Prostate gland (tissue), 2 donors: ENCODE measurements at regions of chr1 and their contacts with region 1.

Region 1: DNA sequence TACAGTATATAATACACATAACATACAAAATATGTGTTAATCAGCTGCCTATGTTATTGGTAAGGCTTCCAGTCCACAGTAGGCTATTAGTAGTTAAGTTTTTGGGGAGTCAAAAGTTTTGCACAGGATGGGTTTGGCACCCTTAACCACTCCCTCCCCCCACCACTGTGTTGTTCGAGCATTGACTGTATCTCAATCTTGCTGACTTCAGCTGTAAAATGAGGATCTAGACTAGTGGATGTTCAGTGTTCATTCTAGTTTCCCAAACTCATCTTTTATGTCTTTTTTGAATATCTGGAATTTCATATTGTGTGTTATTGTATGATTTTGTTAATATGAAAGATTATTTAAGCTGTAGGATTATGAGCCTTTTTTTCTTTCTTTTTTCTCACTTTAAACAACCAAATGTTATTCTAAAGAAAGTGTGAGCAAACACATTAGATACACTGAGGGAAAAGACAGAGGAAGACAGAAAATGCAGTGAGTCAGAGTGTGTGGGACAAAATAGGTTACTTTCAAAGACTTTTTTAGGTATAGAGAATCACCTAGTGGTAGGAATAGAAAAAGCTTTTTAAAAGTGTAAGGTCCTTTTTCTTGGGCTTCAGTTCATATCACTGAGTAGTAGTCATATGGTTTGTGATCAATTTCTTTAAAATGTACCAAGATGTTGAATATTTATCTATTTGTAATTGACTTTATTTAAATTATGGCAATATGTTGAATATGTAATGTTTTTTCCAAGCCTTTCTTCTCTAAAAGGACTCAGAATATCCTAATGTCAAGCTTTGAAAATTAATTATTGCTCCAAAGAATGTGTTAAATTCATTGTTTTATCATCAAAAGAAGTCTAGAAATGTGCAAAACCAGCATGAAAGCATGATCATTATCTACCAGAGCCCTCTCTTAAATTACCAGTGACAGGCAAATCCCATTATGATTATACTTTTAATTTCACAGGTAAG is 17.9 kb upstream of the CENPF start:
- DNase-seq: no peak
- H3K4me3 ChIP-seq: no peak overlapping the region
- H3K27ac ChIP-seq: no peak overlapping the region
- H3K4me1 ChIP-seq: peaks cover 8% of the 10 kb centered on the region
- H3K27me3 ChIP-seq: no peaks in the 10 kb centered on the region
- CTCF ChIP-seq: peak; percentile 34 to 93 (median 78)
- POLR2A ChIP-seq: no peak

Region 2: GRCh38 chr1:214271174-214271858 is 313.8 kb before region 1 on chr1:
- intact Hi-C with region 1: loop called (anchors 10 kb)
- DNase-seq: no peak
- H3K4me3 ChIP-seq: no peak overlapping the region
- H3K27ac ChIP-seq: no peak overlapping the region
- H3K4me1 ChIP-seq: no peaks in the 10 kb centered on the region
- H3K27me3 ChIP-seq: no peaks in the 10 kb centered on the region
- CTCF ChIP-seq: no peak
- POLR2A ChIP-seq: no peak

Region 3: GRCh38 chr1:214328770-214329469 is 256.2 kb before region 1 on chr1:
- intact Hi-C with region 1: loop called (anchors 2 kb)
- DNase-seq: peak; percentile 83
- H3K4me3 ChIP-seq: no peak overlapping the region
- H3K27ac ChIP-seq: peak overlapping the region in 1 of 2 donors; percentile 52
- H3K4me1 ChIP-seq: peaks cover 11% of the 10 kb centered on the region
- H3K27me3 ChIP-seq: no peaks in the 10 kb centered on the region
- CTCF ChIP-seq: peak; percentile 74 to 97 (median 94)
- POLR2A ChIP-seq: no peak

Region 4: GRCh38 chr1:214386747-214387146 is 198.3 kb before region 1 on chr1:
- intact Hi-C with region 1: loop called (anchors 5 kb)
- DNase-seq: no peak
- H3K4me3 ChIP-seq: no peak overlapping the region
- H3K27ac ChIP-seq: no peak overlapping the region
- H3K4me1 ChIP-seq: no peaks in the 10 kb centered on the region
- H3K27me3 ChIP-seq: no peaks in the 10 kb centered on the region
- CTCF ChIP-seq: no peak
- POLR2A ChIP-seq: no peak

Region 5: DNA sequence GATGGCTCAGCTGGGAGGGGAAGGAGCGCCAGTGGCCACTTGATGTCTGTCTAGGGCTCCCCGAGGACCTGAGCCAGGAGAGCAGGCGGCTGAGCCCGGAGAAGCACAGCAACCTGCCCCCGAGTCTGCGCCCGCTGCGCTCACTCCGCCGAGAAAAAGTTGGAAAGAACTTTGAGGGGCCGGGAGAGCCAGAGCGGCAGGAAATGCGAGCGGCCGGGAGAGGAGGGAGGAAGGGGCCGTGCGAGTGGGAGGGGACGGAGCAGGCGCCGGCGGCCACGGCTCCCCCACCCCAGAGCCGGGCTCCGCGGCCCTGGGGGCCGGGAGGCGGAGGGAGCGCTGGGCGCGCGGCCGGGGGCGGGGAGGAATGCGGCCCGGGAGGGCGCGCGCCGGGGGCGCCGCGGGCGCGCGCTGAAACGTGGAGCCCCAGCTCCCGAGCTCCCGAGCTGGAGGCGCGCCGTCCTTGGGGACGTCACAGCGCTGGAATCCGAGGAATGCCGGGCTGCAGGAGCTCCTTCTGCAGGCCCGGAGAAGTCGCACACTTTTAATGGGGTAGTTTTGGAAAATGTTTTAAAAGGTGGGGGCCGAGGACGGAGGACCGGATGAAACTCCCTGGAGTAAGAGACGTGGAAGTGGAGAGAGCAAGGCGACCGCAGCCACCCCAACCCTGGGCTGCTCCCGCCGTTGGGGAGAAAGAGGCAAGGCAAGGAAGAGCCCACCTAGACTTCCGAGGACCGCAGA is 33.5 kb before region 1 on chr1 and contains the start of gene PTPN14:
- intact Hi-C with region 1: loop called (anchors 5 kb)
- DNase-seq: peak; percentile 91
- H3K4me3 ChIP-seq: peak within 1 kb of the TSS; percentile 67 to 87
- H3K27ac ChIP-seq: peak within 1 kb of the TSS; percentile 91 to 98
- H3K4me1 ChIP-seq: no peaks in the 10 kb centered on the region
- H3K27me3 ChIP-seq: no peaks in the 10 kb centered on the region
- CTCF ChIP-seq: peak in 2 of 4 experiments; percentile 22 to 42
- POLR2A ChIP-seq: peak; percentile 73
- total RNA-seq, gene PTPN14: 36.6 to 54.0 TPM

Region 6: DNA sequence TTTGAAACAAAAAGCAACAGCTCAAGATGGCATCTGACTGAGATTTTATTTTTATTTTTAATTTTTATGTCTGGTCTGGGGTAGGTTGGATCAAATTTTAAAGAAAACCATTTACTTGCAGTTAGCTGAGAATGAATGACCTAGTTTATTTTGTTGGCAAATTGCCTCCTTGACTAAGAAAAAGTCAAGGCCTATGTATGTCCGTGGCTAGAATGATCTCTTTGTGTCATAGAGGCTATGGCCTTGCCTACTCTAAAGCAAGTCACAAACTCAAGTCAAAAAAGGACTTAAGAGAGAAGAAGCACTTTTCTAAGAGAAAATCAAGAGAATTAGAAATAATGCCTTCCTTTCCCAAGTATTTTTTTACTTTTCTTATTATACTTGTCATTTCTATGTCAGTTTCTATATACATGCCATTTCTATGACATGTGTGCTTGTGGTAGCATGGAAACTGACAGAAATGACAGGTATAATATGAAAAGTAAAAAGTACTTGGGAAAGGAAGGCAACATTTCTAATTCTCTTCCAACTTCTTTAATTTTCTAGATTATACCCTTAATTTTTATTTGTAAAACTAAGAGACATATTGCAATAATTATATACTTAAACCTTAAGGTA is 154.6 kb after region 1 on chr1:
- intact Hi-C with region 1: no loop called
- DNase-seq: no peak
- H3K4me3 ChIP-seq: no peak overlapping the region
- H3K27ac ChIP-seq: no peak overlapping the region
- H3K4me1 ChIP-seq: no peaks in the 10 kb centered on the region
- H3K27me3 ChIP-seq: no peaks in the 10 kb centered on the region
- CTCF ChIP-seq: no peak
- POLR2A ChIP-seq: no peak